Right ventricle myocardium inferior (tissue), 1 donor: ENCODE measurements at regions of chr4 and their contacts with region 1.

Region 1: DNA sequence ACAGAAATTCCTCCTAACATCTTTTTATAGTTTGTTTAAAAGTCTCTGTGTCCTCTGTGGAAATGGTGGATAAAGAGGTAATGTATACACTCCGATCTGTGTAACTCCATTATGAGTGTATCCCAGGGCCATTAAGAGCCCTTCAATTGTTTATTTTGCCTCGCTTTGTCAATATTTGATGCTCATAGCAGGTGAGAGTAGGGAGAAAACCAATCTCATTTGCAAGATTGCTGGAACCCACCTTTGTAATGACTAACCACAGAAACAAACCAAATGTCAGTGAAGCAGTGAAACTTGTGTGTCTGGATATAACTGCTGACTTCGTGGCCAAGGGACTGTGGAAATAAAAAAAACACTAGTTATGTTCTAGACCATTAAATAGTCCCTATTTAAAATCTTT is 598.2 kb upstream of the BOD1L1 start:
- DNase-seq: no peak
- ATAC-seq: no peak

Region 2: DNA sequence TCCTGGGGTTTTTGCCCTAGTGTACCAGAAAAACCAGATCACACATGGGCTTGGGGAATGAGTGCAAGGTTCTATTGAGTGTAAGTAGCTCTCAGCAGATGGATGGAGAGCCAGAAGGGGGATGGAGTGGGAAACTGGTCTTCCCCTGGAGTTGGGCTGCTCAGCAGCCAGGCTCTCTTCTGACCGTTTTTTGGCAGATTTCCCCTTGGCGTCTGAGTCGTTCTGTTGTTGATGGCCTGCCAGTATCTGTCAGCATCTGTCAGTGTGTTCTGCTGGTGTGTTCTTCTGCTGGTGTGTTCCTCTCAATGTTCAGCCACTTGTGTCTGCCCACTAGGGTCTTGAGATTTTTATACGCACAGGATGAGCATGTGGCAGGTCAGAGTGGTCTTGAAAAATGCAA is 142.6 kb after region 1 on chr4:
- intact Hi-C with region 1: loop called (anchors 10 kb)
- DNase-seq: no peak
- ATAC-seq: peak; percentile 89